Esophagus muscularis mucosa (tissue), 4 donors: ENCODE measurements at regions of chr14 and their contacts with region 1.

Region 1: GRCh38 chr14:22986508-22987054 is 4.2 kb upstream of the AJUBA start:
- DNase-seq: peak; percentile 97
- H3K4me3 ChIP-seq: no peak overlapping the region
- H3K27ac ChIP-seq: no peak overlapping the region
- H3K4me1 ChIP-seq: peaks cover 4 to 20% (median 15%) of the 10 kb centered on the region in 4 donors
- H3K27me3 ChIP-seq: peaks cover 0 to 7% (median 0%) of the 10 kb centered on the region in 4 donors
- CTCF ChIP-seq: peak; percentile 89 to 92 (median 91)
- EP300 ChIP-seq: no peak
- POLR2A ChIP-seq: no peak

Region 2: DNA sequence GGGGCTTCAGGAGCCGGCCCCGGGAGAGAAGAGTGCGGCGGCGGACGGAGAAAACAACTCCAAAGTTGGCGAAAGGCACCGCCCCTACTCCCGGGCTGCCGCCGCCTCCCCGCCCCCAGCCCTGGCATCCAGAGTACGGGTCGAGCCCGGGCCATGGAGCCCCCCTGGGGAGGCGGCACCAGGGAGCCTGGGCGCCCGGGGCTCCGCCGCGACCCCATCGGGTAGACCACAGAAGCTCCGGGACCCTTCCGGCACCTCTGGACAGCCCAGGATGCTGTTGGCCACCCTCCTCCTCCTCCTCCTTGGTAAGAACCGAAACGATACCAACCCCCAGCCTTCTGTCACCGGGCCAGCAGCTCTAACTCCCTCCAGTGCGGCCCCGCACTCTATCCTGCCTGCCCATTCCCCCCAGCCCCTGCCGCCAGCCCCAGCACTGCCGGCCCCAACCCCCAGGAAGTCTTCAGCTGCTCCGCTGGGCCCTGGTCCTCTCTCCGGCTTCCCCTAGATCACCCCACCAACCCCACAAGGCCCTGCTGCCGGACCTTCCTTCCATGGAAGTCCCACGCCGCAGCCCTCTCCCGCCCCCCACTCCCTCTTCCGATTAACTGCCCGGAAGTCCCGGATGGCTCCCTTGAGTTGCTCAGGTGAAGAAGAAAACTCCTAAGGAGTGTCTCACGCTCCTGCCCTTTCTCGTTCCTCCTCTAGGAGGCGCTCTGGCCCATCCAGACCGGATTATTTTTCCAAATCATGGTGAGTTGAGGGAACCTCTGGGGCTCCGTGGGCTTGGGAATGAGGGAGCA is 114.3 kb before region 1 on chr14:
- intact Hi-C with region 1: loop called (anchors 10 kb)
- DNase-seq: peak; percentile 96
- H3K4me3 ChIP-seq: peak overlapping the region; percentile 92 to 100 (median 98)
- H3K27ac ChIP-seq: peak overlapping the region; percentile 98 to 100 (median 100)
- H3K4me1 ChIP-seq: peaks cover 27 to 60% (median 56%) of the 10 kb centered on the region in 4 donors
- H3K27me3 ChIP-seq: peaks cover 0 to 3% (median 0%) of the 10 kb centered on the region in 4 donors
- CTCF ChIP-seq: peak; percentile 94 to 100 (median 98)
- EP300 ChIP-seq: no peak
- POLR2A ChIP-seq: no peak

Region 3: GRCh38 chr14:22929104-22929847 is 57.3 kb before region 1 on chr14 and contains the start of gene PRMT5:
- intact Hi-C with region 1: loop called (anchors 5 kb)
- DNase-seq: peak; percentile 100
- H3K4me3 ChIP-seq: peak within 1 kb of the TSS; percentile 78 to 93 (median 86)
- H3K27ac ChIP-seq: peak within 1 kb of the TSS; percentile 89 to 96 (median 92)
- H3K4me1 ChIP-seq: peaks cover 13 to 33% (median 31%) of the 10 kb centered on the region in 4 donors
- H3K27me3 ChIP-seq: no peaks in the 10 kb centered on the region
- CTCF ChIP-seq: no peak
- EP300 ChIP-seq: no peak
- POLR2A ChIP-seq: peak; percentile 63
- total RNA-seq, gene PRMT5: 35.5 to 51.0 (median 44.8) TPM

Region 4: DNA sequence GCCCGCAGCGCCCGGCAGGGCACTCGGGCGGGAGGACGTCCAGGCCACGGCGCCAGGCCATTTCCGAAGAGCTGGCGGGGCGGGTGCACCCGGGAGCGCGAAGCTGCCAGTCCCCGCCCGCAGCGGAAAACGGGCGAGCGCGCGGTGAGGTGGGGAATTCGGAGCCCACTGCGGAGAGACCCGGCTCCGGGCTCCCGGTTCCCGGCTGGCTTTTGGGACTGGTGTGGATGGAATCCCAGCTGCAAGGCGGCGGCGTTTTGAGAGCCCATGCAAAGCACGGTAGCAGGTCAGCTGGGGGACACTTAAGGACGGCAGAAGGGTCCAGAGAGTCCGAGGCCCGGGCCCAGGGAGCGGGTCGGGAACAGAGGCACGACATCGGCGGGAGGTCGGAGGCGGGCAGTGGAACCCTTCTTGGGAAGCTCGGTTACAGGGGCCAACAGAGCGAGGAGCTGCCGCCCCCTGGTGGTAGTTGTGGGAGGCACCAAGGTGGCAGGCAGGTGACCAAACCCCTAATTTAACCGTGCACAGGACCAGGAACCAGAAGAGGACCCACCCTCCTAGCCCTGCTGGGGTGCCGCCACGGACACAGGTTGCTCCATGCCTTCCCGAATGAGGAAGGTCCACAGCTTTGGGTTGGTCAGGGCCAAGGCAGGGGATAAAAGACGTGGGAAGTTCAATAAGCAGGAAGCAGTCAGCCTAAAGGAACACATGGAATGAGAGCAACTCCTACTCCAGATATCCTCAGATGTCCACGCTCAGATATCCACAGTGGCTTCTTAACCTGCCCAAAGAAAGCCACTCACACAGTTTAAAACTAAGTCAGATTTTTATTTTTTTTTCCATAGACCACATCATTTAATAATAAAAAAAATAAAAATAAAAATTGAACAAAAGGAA is 71.4 kb after region 1 on chr14:
- intact Hi-C with region 1: loop called (anchors 1 kb)
- DNase-seq: peak; percentile 96
- H3K4me3 ChIP-seq: peak overlapping the region; percentile 61 to 81 (median 76)
- H3K27ac ChIP-seq: peak overlapping the region; percentile 73 to 83 (median 81)
- H3K4me1 ChIP-seq: peaks cover 23 to 47% (median 42%) of the 10 kb centered on the region in 4 donors
- H3K27me3 ChIP-seq: no peaks in the 10 kb centered on the region
- CTCF ChIP-seq: peak in 2 of 3 experiments; percentile 92 to 96
- EP300 ChIP-seq: no peak
- POLR2A ChIP-seq: no peak